ENCODE measurements at regions of chr9 and their contacts with region 1.

Region 1: GRCh38 chr9:13427587-13427986 is 148.1 kb upstream of the MPDZ start:
- DNase-seq: peak; percentile 56 to 84 (median 75)
- H3K4me3 ChIP-seq: no peak overlapping the region
- H3K27ac ChIP-seq: no peak overlapping the region
- H3K4me1 ChIP-seq: no peaks in the 10 kb centered on the region
- H3K27me3 ChIP-seq: peaks cover 0 to 17% (median 3%) of the 10 kb centered on the region in 5 experiments

Region 2: GRCh38 chr9:14353222-14354056 is 925.9 kb after region 1 on chr9:
- CTCF ChIA-PET with region 1: interaction called, 73 read pairs
- POLR2A ChIA-PET with region 1: no interaction called
- DNase-seq: peak; percentile 75 to 86 (median 85)
- H3K4me3 ChIP-seq: no peak overlapping the region
- H3K27ac ChIP-seq: no peak overlapping the region
- H3K4me1 ChIP-seq: peaks cover 0 to 14% (median 7%) of the 10 kb centered on the region in 4 experiments
- H3K27me3 ChIP-seq: peaks cover 4 to 73% (median 31%) of the 10 kb centered on the region in 5 experiments

Region 3: GRCh38 chr9:14428781-14429230 is 1001.2 kb after region 1 on chr9:
- CTCF ChIA-PET with region 1: interaction called, 29 read pairs
- POLR2A ChIA-PET with region 1: no interaction called
- DNase-seq: peak; percentile 60 to 75 (median 63)
- H3K4me3 ChIP-seq: no peak overlapping the region
- H3K27ac ChIP-seq: no peak overlapping the region
- H3K4me1 ChIP-seq: peaks cover 0 to 10% (median 0%) of the 10 kb centered on the region in 4 experiments
- H3K27me3 ChIP-seq: peaks cover 0 to 4% (median 2%) of the 10 kb centered on the region in 5 experiments